Activated T-helper 2 cell treated with anti-CD3 and anti-CD28 coated beads, Interferon-gamma antibody, Interleukin-2, Interleukin-4, amounts not matched to agents 10 μg/mL and 5 μg/mL and 100 μg/mL, durations not matched to agents 14 hours and 24 hours and 36 hours (primary cell): ENCODE measurements at regions of chr5 and their contacts with region 1.

Region 1: DNA sequence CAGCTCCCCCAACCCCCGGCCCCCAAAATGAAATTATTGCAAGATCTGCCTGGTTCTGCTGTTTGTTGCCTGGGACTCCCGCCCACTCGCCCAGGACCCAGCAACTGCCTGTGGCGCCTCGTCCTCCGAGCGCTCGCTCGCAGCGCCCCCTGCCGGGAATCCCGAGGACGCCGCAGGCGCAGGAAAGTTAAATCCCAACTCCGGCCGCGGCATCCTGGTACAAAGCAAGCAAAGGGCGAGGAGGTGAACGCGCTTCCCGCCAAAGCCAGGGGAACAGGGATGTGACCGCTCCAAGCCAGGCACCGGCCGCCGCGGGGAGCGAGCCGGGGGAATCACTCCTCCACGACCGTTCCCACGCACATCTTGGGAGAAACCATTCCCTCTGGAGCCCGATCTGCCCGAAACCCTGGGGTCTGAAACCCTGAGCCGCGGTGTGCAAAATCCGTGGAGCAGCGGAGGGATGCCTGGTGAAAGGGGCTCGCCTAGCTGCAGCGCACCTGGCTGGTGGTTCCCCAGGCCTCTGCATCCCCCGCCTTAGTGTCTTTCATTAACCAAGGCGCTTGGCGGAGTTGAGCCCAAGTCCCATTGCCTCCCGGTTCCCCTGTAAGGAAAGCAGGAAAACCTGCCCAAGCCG is 1.3 kb downstream of the SEMA5A start:
- DNase-seq: no peak
- H3K4me3 Mint-ChIP-seq: peak overlapping the region; percentile 71
- H3K27ac Mint-ChIP-seq: peak overlapping the region; percentile 55
- H3K4me1 Mint-ChIP-seq: peaks cover 6% of the 10 kb centered on the region
- H3K27me3 Mint-ChIP-seq: peaks cover 21% of the 10 kb centered on the region

Region 2: GRCh38 chr5:7927466-7928375 is 1616.9 kb before region 1 on chr5:
- intact Hi-C with region 1: loop called (anchors 5 kb)
- DNase-seq: no peak
- H3K4me3 Mint-ChIP-seq: no peak overlapping the region
- H3K27ac Mint-ChIP-seq: no peak overlapping the region
- H3K4me1 Mint-ChIP-seq: no peaks in the 10 kb centered on the region
- H3K27me3 Mint-ChIP-seq: peaks cover 3% of the 10 kb centered on the region

Region 3: GRCh38 chr5:9361835-9362234 is 182.8 kb before region 1 on chr5:
- intact Hi-C with region 1: loop called (anchors 2 kb)
- DNase-seq: peak; percentile 20
- H3K4me3 Mint-ChIP-seq: no peak overlapping the region
- H3K27ac Mint-ChIP-seq: no peak overlapping the region
- H3K4me1 Mint-ChIP-seq: peaks cover 14% of the 10 kb centered on the region
- H3K27me3 Mint-ChIP-seq: no peaks in the 10 kb centered on the region

Region 4: DNA sequence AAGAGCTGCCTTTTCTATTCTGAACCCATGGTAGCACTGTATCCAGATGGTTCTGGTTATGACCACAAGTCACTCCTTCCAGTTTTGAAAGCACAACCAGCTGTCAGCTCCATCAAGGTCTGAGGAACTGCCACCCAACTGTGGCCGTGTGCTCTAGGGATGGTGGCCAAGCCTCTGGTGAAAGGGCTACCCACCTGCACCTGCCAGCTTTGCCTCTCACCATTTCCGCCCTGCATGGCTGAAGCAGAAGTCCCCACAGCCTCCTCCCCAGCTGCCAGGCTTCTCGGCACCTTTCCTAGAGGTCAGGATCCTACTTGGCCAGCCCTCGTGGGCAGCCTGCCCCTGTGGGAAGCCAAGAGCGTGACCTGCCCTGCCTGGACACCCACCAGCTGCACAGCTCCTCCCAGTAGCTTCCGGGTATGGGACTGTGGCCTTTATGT is 15.6 kb before region 1 on chr5:
- intact Hi-C with region 1: no loop called
- DNase-seq: no peak
- H3K4me3 Mint-ChIP-seq: no peak overlapping the region
- H3K27ac Mint-ChIP-seq: no peak overlapping the region
- H3K4me1 Mint-ChIP-seq: no peaks in the 10 kb centered on the region
- H3K27me3 Mint-ChIP-seq: no peaks in the 10 kb centered on the region